A549 (cell line): ENCODE measurements at regions of chr12 and their contacts with region 1.

Region 1: GRCh38 chr12:4037747-4038312 is 164.6 kb upstream of the PARP11 start:
- DNase-seq: peak; percentile 29 to 42
- ATAC-seq: peak; percentile 51 to 75; a peak in 3 of 6 replicates
- H3K4me3 ChIP-seq: no peak overlapping the region
- H3K27ac ChIP-seq: no peak overlapping the region
- H3K4me1 ChIP-seq: peaks cover 11% of the 10 kb centered on the region; the same call in 2 of the 3 replicates
- CTCF ChIP-seq: peak; percentile 80
- EP300 ChIP-seq: no peak
- POLR2A ChIP-seq: no peak
- RAD21 ChIP-seq: peak; percentile 79 to 81

Region 2: DNA sequence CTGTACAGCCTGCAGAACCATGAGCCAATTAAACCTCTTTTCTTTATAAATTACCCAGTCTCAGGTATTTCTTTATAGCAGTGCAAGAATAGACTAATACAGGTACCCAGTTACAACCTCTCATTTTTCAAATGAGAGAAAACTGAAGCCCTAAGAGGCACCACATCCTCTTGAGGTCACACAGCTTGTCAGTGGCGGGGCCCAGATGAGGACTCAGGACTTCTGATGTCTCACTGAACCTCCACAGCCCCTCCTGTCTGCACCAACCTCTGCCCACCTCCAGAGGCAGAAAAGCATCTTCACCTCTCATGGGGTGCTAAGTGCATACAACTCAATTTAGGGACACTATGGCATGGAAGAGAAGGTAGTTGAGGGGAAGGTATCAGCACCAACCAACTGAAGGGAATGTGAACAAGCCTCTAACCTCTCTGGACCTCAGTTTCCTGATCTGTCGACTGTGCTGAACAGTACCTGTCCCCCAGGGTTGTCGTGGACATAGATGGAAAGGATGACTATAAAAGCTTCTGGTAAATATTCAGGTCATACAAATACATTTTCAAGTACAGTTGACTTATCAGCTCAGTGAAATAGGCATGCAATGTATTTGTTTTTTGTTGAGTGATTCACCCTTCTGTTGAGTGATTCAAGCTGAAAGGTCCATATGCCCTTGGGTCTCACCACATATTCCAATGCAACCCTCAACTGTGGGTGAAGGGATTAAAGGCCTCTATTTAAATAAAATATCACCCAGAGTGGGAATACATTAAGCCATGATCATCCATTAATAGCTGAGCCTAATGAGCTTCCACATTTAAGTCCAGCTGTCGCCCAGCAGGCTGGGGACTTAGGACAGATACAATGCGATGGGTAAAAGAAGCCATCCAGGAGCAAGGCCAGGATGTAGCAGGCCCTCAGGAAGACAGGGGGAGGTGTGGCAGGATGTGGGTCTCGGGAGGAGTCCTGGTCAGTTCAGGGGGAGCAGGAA is 405.3 kb before region 1 on chr12:
- CTCF ChIA-PET with region 1: no interaction called
- POLR2A ChIA-PET with region 1: no interaction called
- DNase-seq: no peak
- ATAC-seq: no peak
- H3K4me3 ChIP-seq: no peak overlapping the region
- H3K27ac ChIP-seq: no peak overlapping the region
- H3K4me1 ChIP-seq: no peaks in the 10 kb centered on the region
- CTCF ChIP-seq: no peak
- EP300 ChIP-seq: no peak
- POLR2A ChIP-seq: no peak
- RAD21 ChIP-seq: no peak

Region 3: DNA sequence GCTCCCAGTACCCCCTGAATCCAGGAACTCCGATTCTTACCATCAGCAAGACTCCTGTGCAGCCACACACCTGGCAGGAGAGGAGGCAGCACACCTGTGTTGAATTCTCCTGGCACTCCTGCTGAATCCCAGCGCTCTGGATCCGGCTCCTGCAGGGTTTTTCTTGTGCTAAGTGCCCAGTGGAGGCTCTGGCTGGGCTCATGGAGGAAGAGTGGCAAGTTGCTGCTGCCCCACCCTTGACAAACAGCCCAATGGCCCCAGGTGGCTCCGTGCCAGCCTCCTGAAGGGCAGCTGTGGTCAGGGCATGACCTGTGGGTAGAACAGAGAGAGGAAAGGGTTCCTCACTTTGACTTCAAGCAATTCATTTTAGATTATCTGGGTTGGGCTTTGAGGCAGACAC is 304.9 kb before region 1 on chr12:
- CTCF ChIA-PET with region 1: no interaction called
- POLR2A ChIA-PET with region 1: no interaction called
- DNase-seq: no peak
- ATAC-seq: no peak
- H3K4me3 ChIP-seq: no peak overlapping the region
- H3K27ac ChIP-seq: no peak overlapping the region
- H3K4me1 ChIP-seq: no peaks in the 10 kb centered on the region
- CTCF ChIP-seq: no peak
- EP300 ChIP-seq: no peak
- POLR2A ChIP-seq: no peak
- RAD21 ChIP-seq: no peak

Region 4: DNA sequence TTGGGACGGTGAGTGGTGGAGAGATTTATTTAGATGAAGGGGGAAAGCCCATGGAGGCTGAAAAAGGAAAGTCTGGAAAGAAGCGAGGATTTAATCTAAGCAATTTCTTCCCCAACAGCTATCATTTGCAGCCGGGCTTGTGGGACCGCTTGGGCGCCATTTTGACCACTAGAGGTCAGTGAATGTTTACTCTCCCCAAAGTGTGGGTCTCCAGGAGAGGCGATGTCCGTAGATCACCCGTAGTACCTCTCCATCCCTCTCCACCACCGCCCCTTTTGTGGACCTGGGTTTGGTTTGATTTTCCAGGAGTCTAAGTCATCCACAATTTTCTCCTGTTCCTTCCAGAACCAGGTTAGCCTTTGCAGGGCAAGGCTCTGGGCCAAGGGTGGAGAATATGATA is 73.4 kb before region 1 on chr12:
- CTCF ChIA-PET with region 1: interaction called, 20 read pairs
- POLR2A ChIA-PET with region 1: no interaction called
- DNase-seq: peak; percentile 23 to 26
- ATAC-seq: peak in 1 of 2 experiments; percentile 82; a peak in 4 of 6 replicates
- H3K4me3 ChIP-seq: no peak overlapping the region
- H3K27ac ChIP-seq: no peak overlapping the region
- H3K4me1 ChIP-seq: no peaks in the 10 kb centered on the region
- CTCF ChIP-seq: no peak; the same call in 2 of the 3 replicates
- EP300 ChIP-seq: no peak
- POLR2A ChIP-seq: no peak
- RAD21 ChIP-seq: peak; percentile 36 to 55; a peak in 3 of 5 replicates

Region 5: DNA sequence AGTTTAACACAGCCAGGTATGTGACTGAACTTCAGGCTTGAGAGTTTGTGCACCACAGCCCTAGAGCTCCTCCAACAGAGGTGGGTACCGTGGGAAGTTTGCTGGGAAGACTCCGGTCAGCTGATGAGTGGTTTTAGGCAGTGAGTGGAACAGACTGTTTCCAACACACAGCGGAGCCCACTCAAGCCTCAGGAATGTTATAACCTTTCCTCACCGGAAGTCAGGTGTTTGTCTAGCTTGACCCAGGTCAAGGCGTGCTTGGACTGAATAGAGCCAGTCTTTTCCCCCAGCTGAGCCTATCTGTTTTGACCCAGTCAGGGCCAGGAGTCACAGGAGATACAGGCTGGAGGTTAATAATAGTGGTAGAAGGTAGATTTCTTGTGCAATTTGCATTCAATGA is 26.2 kb before region 1 on chr12:
- CTCF ChIA-PET with region 1: interaction called, 11 read pairs
- POLR2A ChIA-PET with region 1: no interaction called
- DNase-seq: peak in 1 of 2 experiments; percentile 49
- ATAC-seq: peak in 1 of 2 experiments; percentile 35; a peak in 4 of 6 replicates
- H3K4me3 ChIP-seq: no peak overlapping the region
- H3K27ac ChIP-seq: no peak overlapping the region
- H3K4me1 ChIP-seq: no peaks in the 10 kb centered on the region
- CTCF ChIP-seq: no peak
- EP300 ChIP-seq: no peak
- POLR2A ChIP-seq: no peak
- RAD21 ChIP-seq: no peak

Region 6: GRCh38 chr12:4052691-4053090 is 14.9 kb after region 1 on chr12:
- CTCF ChIA-PET with region 1: interaction called, 38 read pairs
- POLR2A ChIA-PET with region 1: no interaction called
- DNase-seq: no peak
- ATAC-seq: no peak
- H3K4me3 ChIP-seq: no peak overlapping the region
- H3K27ac ChIP-seq: no peak overlapping the region
- H3K4me1 ChIP-seq: no peaks in the 10 kb centered on the region
- CTCF ChIP-seq: no peak
- EP300 ChIP-seq: no peak
- POLR2A ChIP-seq: no peak
- RAD21 ChIP-seq: no peak